ENCODE measurements at regions of chr3 and their contacts with region 1.

Region 1: GRCh38 chr3:169662132-169662842 is 1.2 kb downstream of the MECOM start:
- DNase-seq: peak; percentile 82
- ATAC-seq: peak; percentile 82

Region 2: GRCh38 chr3:169041677-169042171 is 620.6 kb before region 1 on chr3:
- intact Hi-C with region 1: loop called (anchors 5 kb)
- DNase-seq: no peak
- ATAC-seq: no peak

Region 3: GRCh38 chr3:169218314-169218983 is 443.8 kb before region 1 on chr3:
- intact Hi-C with region 1: loop called (anchors 5 kb)
- DNase-seq: no peak
- ATAC-seq: peak; percentile 68

Region 4: GRCh38 chr3:169387751-169388696 is 274.3 kb before region 1 on chr3:
- intact Hi-C with region 1: loop called (anchors 5 kb)
- DNase-seq: peak; percentile 80
- ATAC-seq: peak; percentile 90

Region 5: DNA sequence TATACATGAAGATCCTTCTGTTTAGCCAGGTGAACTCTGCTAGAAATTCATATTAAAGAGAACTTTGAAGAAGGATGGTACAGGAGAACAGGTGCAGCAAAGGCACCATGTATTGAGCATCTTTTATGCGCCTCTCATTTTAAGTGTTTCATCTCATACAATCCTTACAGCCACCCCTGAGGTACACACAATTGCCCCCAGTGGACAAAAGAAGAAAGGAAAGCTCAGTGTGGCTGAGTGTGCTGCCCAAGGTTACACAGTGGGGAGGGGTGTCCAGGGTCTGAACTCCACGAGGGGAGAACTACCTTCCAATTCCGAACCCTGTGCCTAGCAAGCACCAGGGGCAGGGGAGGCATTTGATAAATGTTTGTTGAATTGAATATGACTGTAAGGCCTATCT is 97.4 kb before region 1 on chr3:
- intact Hi-C with region 1: loop called (anchors 5 kb)
- DNase-seq: no peak
- ATAC-seq: no peak